ENCODE measurements at regions of chr16 and their contacts with region 1.

Region 1: DNA sequence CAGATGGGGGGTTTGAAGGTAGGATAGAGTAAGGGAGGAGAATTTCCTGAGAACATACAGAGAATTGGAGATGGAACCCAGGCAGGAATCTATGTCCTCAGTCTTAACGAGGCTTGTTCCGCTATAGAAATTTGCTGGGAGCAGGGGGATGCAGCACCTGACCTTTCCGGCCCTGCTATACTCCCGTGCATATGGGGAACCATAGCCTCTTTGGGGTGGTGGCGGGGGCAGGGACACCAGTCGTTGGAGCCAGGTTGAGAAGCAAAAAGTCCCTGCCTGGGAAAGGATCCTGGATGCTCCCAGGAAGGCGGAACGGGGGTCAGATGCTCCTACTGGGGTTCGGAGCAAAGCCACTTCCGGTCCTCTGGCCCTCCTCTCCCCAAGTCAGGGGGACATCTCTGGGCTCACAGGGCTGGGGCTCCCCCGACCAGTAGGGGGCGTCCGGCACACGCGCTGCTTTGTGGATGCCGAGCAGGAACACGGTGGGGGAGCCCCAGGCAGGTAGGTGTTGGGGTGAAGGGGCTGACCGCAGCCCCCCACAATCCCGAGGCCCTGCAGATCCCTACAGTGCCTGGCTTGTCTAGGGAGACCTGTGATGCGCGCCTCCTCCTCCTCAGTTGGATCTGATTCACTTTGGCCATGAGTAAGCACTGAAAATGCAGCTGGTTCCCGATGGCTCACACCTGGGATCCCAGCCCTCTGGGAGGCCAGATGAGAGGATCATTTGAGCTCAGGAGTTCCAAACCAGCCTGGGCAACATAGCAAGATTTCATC is 15.5 kb upstream of the TFAP4 start:
- DNase-seq: peak; percentile 61 to 86 (median 76)
- ATAC-seq: peak; percentile 96
- H3K4me3 ChIP-seq: no peak overlapping the region
- H3K4me3 Mint-ChIP-seq: peak overlapping the region in 1 of 10 donors; percentile 53
- H3K27ac ChIP-seq: no peak overlapping the region
- H3K27ac Mint-ChIP-seq: peak overlapping the region in 2 of 9 donors; percentile 18 to 49
- H3K4me1 ChIP-seq: peaks cover 6 to 7% of the 10 kb centered on the region in 2 donors
- H3K4me1 Mint-ChIP-seq: peaks cover 4 to 11% (median 5%) of the 10 kb centered on the region in 7 donors
- H3K27me3 ChIP-seq: no peaks in the 10 kb centered on the region
- H3K27me3 Mint-ChIP-seq: peaks cover 5 to 23% (median 11%) of the 10 kb centered on the region in 5 donors

Region 2: GRCh38 chr16:4330277-4330874 is 42.0 kb after region 1 on chr16:
- CTCF ChIA-PET with region 1: interaction called, 21 read pairs
- POLR2A ChIA-PET with region 1: interaction called, 3 read pairs
- intact Hi-C with region 1: loop called (anchors 1 kb)
- DNase-seq: peak; percentile 39 to 82 (median 58)
- ATAC-seq: peak; percentile 80
- H3K4me3 ChIP-seq: no peak overlapping the region
- H3K4me3 Mint-ChIP-seq: no peak overlapping the region
- H3K27ac ChIP-seq: no peak overlapping the region
- H3K27ac Mint-ChIP-seq: peak overlapping the region in 1 of 9 donors; percentile 40
- H3K4me1 ChIP-seq: peaks cover 0 to 3% of the 10 kb centered on the region in 2 donors
- H3K4me1 Mint-ChIP-seq: peaks cover 0 to 4% (median 0%) of the 10 kb centered on the region in 7 donors
- H3K27me3 ChIP-seq: no peaks in the 10 kb centered on the region
- H3K27me3 Mint-ChIP-seq: peaks cover 0 to 15% (median 0%) of the 10 kb centered on the region in 5 donors

Region 3: DNA sequence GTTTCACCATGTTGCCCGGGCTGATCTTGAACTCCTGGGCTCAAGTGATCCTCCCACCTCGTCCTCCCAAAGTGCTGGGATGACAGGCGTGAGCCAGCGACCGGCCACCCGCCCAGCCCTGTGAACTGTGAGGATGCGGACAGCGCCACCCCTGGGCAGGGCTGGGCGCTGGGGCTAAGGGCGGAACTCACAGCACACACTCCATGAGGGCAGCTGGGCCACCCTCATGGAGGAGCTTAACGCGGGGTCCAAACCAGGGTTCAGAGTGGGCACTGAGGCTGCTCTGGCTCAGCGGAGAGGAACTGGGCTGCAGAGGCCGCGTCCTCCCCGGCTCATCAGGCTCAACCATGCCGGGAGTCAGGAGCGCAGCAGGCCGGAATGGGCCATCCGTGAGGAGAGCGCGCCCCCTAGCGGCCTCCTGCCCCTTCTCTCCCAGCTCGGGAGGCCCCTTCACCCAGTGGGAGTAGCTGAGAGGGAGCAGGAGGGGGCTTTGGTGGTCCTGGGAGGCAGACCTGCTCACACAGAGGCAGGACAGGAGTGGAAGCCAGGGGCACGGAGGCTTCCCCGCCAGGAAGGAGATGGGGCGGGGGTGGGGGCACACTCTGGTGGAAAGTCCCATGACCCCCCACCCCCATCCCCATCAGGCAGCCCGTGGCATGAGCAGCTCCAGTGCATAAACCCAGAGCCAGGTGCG is 114.3 kb after region 1 on chr16:
- CTCF ChIA-PET with region 1: interaction called, 12 read pairs
- POLR2A ChIA-PET with region 1: no interaction called
- intact Hi-C with region 1: loop called (anchors 1 kb)
- DNase-seq: peak in 8 of 9 donors; percentile 33 to 76 (median 64)
- ATAC-seq: peak; percentile 61
- H3K4me3 ChIP-seq: no peak overlapping the region
- H3K4me3 Mint-ChIP-seq: peak overlapping the region in 1 of 10 donors; percentile 13
- H3K27ac ChIP-seq: no peak overlapping the region
- H3K27ac Mint-ChIP-seq: peak overlapping the region in 4 of 9 donors; percentile 14 to 66 (median 28)
- H3K4me1 ChIP-seq: no peaks in the 10 kb centered on the region
- H3K4me1 Mint-ChIP-seq: peaks cover 9 to 29% (median 19%) of the 10 kb centered on the region in 7 donors
- H3K27me3 ChIP-seq: no peaks in the 10 kb centered on the region
- H3K27me3 Mint-ChIP-seq: no peaks in the 10 kb centered on the region

Region 4: GRCh38 chr16:4550591-4550990 is 262.3 kb after region 1 on chr16:
- CTCF ChIA-PET with region 1: no interaction called
- POLR2A ChIA-PET with region 1: no interaction called
- intact Hi-C with region 1: loop called in 1 of 2 experiments (anchors 1 kb)
- DNase-seq: no peak
- ATAC-seq: no peak
- H3K4me3 ChIP-seq: no peak overlapping the region
- H3K4me3 Mint-ChIP-seq: no peak overlapping the region
- H3K27ac ChIP-seq: no peak overlapping the region
- H3K27ac Mint-ChIP-seq: peak overlapping the region in 1 of 9 donors; percentile 36
- H3K4me1 ChIP-seq: peaks cover 0 to 7% of the 10 kb centered on the region in 2 donors
- H3K4me1 Mint-ChIP-seq: peaks cover 0 to 10% (median 5%) of the 10 kb centered on the region in 7 donors
- H3K27me3 ChIP-seq: no peaks in the 10 kb centered on the region
- H3K27me3 Mint-ChIP-seq: peaks cover 0 to 6% (median 0%) of the 10 kb centered on the region in 5 donors

Region 5: GRCh38 chr16:4580245-4580644 is 291.9 kb after region 1 on chr16:
- CTCF ChIA-PET with region 1: no interaction called
- POLR2A ChIA-PET with region 1: no interaction called
- intact Hi-C with region 1: loop called in 1 of 2 experiments (anchors 1 kb)
- DNase-seq: no peak
- ATAC-seq: no peak
- H3K4me3 ChIP-seq: no peak overlapping the region
- H3K4me3 Mint-ChIP-seq: no peak overlapping the region
- H3K27ac ChIP-seq: no peak overlapping the region
- H3K27ac Mint-ChIP-seq: no peak overlapping the region
- H3K4me1 ChIP-seq: no peaks in the 10 kb centered on the region
- H3K4me1 Mint-ChIP-seq: no peaks in the 10 kb centered on the region
- H3K27me3 ChIP-seq: no peaks in the 10 kb centered on the region
- H3K27me3 Mint-ChIP-seq: no peaks in the 10 kb centered on the region

Measured in naive thymus-derived CD4-positive, alpha-beta T cell (primary cell).